Left cardiac atrium (tissue), 4 donors: ENCODE measurements at regions of chr19 and their contacts with region 1.

Region 1: GRCh38 chr19:36114763-36115452 is at the start of gene POLR2I:
- DNase-seq: peak; percentile 99
- ATAC-seq: peak; percentile 95 to 97
- total RNA-seq, gene POLR2I: 92.6 to 104 TPM

Region 2: GRCh38 chr19:36054119-36054732 is 60.7 kb before region 1 on chr19 and contains the start of gene THAP8:
- intact Hi-C with region 1: loop called in 1 of 2 experiments (anchors 10 kb)
- DNase-seq: peak; percentile 100
- ATAC-seq: peak; percentile 97
- total RNA-seq, gene THAP8: 2.3 to 4.4 TPM

Region 3: DNA sequence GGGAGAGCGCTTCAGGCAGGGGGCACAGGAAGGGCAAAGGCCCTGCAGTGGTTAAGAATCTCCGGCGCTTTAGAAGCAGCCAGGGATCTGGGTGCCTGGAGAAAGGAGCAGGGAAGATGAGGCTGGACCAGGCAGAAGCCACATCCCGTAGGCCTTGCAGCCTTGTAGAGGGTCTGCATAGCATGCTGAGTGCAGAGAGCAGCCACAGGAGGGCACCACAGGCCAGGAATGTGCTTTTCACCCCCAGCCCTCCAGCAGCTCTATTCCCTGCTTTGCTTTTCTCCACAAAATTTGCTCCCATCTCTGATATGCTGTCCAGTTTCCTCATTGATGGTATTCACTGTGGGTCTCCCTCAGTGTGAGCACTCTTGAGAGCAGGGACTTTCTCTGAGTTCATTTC is 54.5 kb before region 1 on chr19:
- intact Hi-C with region 1: loop called (anchors 10 kb)
- DNase-seq: peak; percentile 35
- ATAC-seq: peak; percentile 84 to 86

Region 4: DNA sequence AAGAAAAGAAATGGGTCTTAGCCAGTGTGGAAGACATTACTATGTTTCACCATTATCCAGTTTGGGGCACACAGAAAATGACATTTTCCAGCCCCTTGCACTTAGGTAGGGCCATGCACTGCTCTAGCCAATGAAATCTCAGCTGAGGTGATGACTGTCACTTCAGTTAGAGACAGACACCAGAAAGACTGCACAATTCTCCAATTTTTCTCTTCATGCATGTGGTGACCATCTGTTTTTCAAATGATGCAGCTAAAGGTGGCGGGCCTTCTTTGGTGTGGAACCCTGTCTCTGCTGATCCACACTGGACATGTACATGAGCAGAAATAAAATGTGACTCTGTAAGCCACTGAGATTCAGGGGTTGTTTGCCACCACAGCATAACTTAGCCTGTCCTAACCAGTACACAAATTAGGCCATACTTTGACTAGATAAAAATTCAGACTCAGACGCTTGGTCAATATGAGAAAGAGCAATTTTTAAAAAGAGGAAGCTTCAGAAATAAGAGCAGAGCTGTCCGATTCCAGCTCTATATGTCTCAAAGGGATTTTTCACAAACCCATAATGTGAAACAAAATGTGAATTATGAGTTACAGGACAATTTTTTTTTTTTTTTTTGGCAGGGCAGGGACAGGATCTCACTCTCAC is 92.8 kb after region 1 on chr19:
- intact Hi-C with region 1: no loop called
- DNase-seq: no peak
- ATAC-seq: no peak

Region 5: GRCh38 chr19:36257520-36257876 is 142.6 kb after region 1 on chr19:
- intact Hi-C with region 1: no loop called
- DNase-seq: peak; percentile 72
- ATAC-seq: peak; percentile 85 to 89